ENCODE measurements at regions of chr12 and their contacts with region 1.

Region 1: DNA sequence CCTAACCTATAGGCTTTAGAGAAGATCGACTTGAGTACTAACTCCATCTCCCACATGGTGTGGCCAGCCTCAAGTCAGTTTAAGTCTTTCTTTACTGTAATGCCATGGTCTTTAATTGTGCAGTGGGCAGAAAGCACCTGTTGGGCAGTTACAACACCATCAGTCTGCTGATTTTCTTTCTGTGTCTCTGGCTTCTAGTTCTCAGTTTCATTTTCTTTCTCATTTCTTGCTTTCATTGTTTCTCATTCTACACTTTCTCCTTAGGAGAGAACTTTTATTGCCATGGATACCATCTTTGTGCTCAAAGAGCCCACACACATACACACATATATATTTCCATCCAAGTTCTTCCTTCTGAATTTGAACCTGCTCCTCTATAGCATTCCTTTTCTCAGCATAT is 96.1 kb upstream of the SLC16A7 start:
- DNase-seq: no peak
- H3K4me3 ChIP-seq: no peak overlapping the region
- H3K27ac ChIP-seq: no peak overlapping the region
- H3K4me1 ChIP-seq: no peaks in the 10 kb centered on the region
- H3K27me3 ChIP-seq: no peaks in the 10 kb centered on the region
- CTCF ChIP-seq: no peak
- POLR2A ChIP-seq: no peak

Region 2: GRCh38 chr12:59911516-59911915 is 411.7 kb after region 1 on chr12:
- intact Hi-C with region 1: no loop called
- DNase-seq: no peak
- H3K4me3 ChIP-seq: no peak overlapping the region
- H3K27ac ChIP-seq: no peak overlapping the region
- H3K4me1 ChIP-seq: no peaks in the 10 kb centered on the region
- H3K27me3 ChIP-seq: no peaks in the 10 kb centered on the region
- CTCF ChIP-seq: no peak
- POLR2A ChIP-seq: no peak

Region 3: DNA sequence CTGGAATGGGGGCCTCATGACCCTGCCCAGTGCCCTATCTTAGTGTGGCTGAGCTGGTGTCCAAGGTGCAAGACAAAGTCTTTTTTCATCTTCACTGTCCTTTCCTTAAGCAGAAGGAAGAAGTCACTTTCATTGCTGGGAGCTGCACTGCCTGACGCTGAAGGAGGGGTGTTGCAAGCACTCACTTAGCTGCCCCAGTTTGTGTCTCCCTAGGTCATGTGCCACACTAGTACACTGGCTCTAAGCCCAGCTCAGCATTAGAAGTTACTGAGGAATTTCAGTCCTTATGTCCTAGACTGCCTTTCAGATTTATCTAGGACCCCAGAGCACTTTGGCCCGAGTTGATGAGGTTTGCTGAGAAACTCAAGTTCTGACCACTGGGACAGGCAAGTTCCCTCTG is 1808.4 kb after region 1 on chr12:
- intact Hi-C with region 1: loop called (anchors 5 kb)
- DNase-seq: no peak
- H3K4me3 ChIP-seq: no peak overlapping the region
- H3K27ac ChIP-seq: no peak overlapping the region
- H3K4me1 ChIP-seq: no peaks in the 10 kb centered on the region
- H3K27me3 ChIP-seq: no peaks in the 10 kb centered on the region
- CTCF ChIP-seq: no peak
- POLR2A ChIP-seq: no peak